Common myeloid progenitor, CD34-positive (primary cell): ENCODE measurements at regions of chr7 and their contacts with region 1.

Region 1: GRCh38 chr7:92680442-92680841 is 90.3 kb upstream of the FAM133B start:
- DNase-seq: no peak
- H3K4me3 ChIP-seq: no peak overlapping the region
- H3K27ac ChIP-seq: no peak overlapping the region
- H3K4me1 ChIP-seq: peaks cover 12 to 56% (median 30%) of the 10 kb centered on the region in 4 experiments
- H3K27me3 ChIP-seq: no peaks in the 10 kb centered on the region

Region 2: DNA sequence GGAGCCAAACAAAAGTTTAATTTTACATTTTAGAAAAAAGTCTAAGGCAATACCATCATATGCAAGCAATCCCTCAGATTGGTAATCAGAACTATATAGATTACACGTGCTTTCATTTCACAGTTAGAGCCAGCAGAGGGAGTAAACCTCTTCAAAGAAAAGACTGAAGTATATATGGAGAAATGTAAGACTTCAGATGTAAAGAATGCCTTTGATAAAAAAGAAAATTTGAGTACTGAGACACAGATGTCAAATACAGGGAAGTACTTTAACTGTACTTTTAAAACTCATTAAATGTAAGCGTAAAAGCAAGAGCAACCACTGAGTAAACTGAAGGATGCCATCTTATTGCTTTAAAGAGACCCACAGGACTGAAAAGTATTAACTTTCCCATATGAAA is 11.1 kb after region 1 on chr7:
- CTCF ChIA-PET with region 1: interaction called, 12 read pairs
- POLR2A ChIA-PET with region 1: no interaction called
- DNase-seq: peak; percentile 73 to 85 (median 84)
- H3K4me3 ChIP-seq: no peak overlapping the region
- H3K27ac ChIP-seq: peak overlapping the region; percentile 37 to 45
- H3K4me1 ChIP-seq: peaks cover 0 to 31% (median 14%) of the 10 kb centered on the region in 4 experiments
- H3K27me3 ChIP-seq: no peaks in the 10 kb centered on the region

Region 3: DNA sequence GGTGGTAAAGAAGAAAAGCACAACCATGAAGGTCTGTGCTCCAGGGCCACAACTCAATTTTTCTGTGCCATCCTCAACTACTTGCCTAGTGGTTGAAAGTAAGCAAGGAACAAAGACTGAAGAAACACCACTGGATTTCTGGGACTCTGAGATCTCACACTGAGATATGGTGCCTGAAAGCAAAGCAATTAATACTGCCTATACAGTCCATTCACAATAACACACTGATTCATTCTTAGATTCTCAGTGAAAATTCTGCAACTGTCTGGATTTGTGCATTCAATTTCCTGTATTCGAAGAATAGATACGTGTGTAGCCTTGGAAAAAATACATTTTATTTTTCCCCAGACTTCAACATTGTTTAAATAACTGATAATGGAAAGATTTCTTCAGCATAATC is 26.1 kb after region 1 on chr7:
- CTCF ChIA-PET with region 1: no interaction called
- POLR2A ChIA-PET with region 1: no interaction called
- DNase-seq: no peak
- H3K4me3 ChIP-seq: no peak overlapping the region
- H3K27ac ChIP-seq: no peak overlapping the region
- H3K4me1 ChIP-seq: peaks cover 0 to 11% (median 6%) of the 10 kb centered on the region in 4 experiments
- H3K27me3 ChIP-seq: no peaks in the 10 kb centered on the region

Region 4: DNA sequence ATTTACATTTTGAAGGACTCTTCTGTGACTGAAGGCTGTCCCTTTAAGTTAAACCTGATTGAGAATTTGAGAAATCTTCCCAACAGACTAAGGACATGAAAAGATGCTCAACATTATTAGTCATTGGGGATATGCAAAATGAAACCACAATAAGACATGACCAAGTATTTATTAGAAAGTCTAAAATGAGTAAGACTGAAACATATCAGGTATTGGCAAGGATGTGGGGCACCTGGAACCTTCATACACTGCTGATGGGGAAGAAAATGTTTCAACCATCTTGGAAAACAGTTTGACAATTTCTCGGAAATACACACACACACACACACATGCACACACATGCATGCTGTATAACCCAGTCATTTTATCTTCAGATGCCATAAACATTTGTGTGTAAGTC is 288.1 kb after region 1 on chr7:
- CTCF ChIA-PET with region 1: no interaction called
- POLR2A ChIA-PET with region 1: no interaction called
- DNase-seq: no peak
- H3K4me3 ChIP-seq: no peak overlapping the region
- H3K27ac ChIP-seq: no peak overlapping the region
- H3K4me1 ChIP-seq: no peaks in the 10 kb centered on the region
- H3K27me3 ChIP-seq: no peaks in the 10 kb centered on the region